Caco-2 (cell line): ENCODE measurements at regions of chr11 and their contacts with region 1.

Region 1: GRCh38 chr11:62081378-62082291 is 42.2 kb upstream of the INCENP start:
- DNase-seq: peak; percentile 71 to 87
- H3K4me3 ChIP-seq: no peak overlapping the region
- H3K4me3 Mint-ChIP-seq: no peak overlapping the region
- H3K27ac Mint-ChIP-seq: no peak overlapping the region
- H3K4me1 ChIP-seq: no peaks in the 10 kb centered on the region
- H3K4me1 Mint-ChIP-seq: no peaks in the 10 kb centered on the region
- H3K27me3 ChIP-seq: no peaks in the 10 kb centered on the region; the same call in 1 of the 2 replicates
- H3K27me3 Mint-ChIP-seq: no peaks in the 10 kb centered on the region
- CTCF ChIP-seq: peak; percentile 89 to 91

Region 2: DNA sequence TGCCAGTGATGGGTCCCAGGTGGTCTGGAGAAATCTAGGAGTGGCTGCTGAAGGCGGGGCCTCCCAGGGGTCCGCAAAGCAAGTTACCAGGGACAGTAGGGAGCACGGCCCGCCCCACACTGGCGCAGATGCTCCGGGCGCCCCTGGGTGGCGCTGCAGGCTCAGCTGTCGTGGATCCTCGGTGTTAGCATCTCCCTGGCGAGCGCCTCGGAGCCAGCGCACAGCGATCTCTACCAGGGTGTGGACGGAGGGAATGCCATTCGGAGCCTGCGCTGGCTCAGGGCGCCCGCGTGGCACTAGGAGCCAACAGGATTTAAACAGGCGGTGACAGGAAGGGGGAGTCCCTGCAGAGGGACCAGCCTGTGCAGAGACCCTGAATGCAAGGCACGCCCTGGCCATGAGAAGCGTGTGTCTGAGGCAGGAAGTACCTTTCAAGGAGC is 210.5 kb before region 1 on chr11:
- CTCF ChIA-PET with region 1: interaction called, 3 read pairs
- POLR2A ChIA-PET with region 1: no interaction called
- intact Hi-C with region 1: loop called (anchors 1 kb)
- DNase-seq: peak; percentile 64 to 79
- H3K4me3 ChIP-seq: no peak overlapping the region
- H3K4me3 Mint-ChIP-seq: no peak overlapping the region
- H3K27ac Mint-ChIP-seq: no peak overlapping the region
- H3K4me1 ChIP-seq: peaks cover 12% of the 10 kb centered on the region
- H3K4me1 Mint-ChIP-seq: no peaks in the 10 kb centered on the region
- H3K27me3 ChIP-seq: no peaks in the 10 kb centered on the region
- H3K27me3 Mint-ChIP-seq: no peaks in the 10 kb centered on the region
- CTCF ChIP-seq: peak; percentile 83 to 86

Region 3: GRCh38 chr11:61899146-61899841 is 182.3 kb before region 1 on chr11:
- CTCF ChIA-PET with region 1: interaction called, 48 read pairs
- POLR2A ChIA-PET with region 1: no interaction called
- intact Hi-C with region 1: loop called (anchors 1 kb)
- DNase-seq: peak; percentile 89 to 96
- H3K4me3 ChIP-seq: no peak overlapping the region
- H3K4me3 Mint-ChIP-seq: no peak overlapping the region
- H3K27ac Mint-ChIP-seq: no peak overlapping the region
- H3K4me1 ChIP-seq: no peaks in the 10 kb centered on the region
- H3K4me1 Mint-ChIP-seq: no peaks in the 10 kb centered on the region
- H3K27me3 ChIP-seq: no peaks in the 10 kb centered on the region
- H3K27me3 Mint-ChIP-seq: no peaks in the 10 kb centered on the region
- CTCF ChIP-seq: peak; percentile 100

Region 4: GRCh38 chr11:61954851-61955421 is 126.7 kb before region 1 on chr11:
- CTCF ChIA-PET with region 1: interaction called, 48 read pairs
- POLR2A ChIA-PET with region 1: interaction called, 8 read pairs
- intact Hi-C with region 1: loop called (anchors 2 kb)
- DNase-seq: peak; percentile 67 to 79
- H3K4me3 ChIP-seq: peak overlapping the region; percentile 43
- H3K4me3 Mint-ChIP-seq: peak overlapping the region; percentile 71
- H3K27ac Mint-ChIP-seq: peak overlapping the region; percentile 66
- H3K4me1 ChIP-seq: peaks cover 11% of the 10 kb centered on the region
- H3K4me1 Mint-ChIP-seq: no peaks in the 10 kb centered on the region
- H3K27me3 ChIP-seq: no peaks in the 10 kb centered on the region
- H3K27me3 Mint-ChIP-seq: no peaks in the 10 kb centered on the region
- CTCF ChIP-seq: peak in 1 of 2 experiments; percentile 37

Region 5: DNA sequence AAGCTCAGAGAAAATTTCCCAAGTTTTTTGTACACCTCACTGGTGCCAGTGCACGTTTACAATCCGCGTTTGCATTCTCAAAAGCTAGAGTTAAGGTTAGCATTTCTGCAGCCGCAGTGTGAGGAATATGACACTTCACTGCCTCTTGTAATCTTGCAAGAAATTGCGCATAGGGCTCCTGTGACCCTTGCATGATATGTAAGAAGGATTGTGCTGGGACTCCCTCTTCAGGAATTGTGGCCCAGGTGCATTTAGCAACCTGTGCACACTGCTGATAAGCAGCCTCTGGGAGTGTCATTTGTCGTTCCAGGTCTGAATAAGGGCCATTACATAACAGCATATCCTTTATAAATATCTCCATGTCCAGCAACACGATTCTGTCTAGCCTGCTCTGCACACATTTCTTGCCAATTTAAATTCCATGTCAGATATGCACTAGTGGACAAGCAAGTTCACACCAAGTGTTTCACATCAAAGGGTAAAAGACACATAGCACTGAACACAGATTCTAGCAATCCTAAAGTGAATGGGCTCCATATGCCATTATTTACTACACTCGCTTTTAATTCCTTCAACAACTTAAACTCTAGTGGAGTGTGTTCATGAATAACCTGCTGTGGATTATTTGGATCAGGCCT is 27.0 kb before region 1 on chr11:
- CTCF ChIA-PET with region 1: interaction called, 3 read pairs
- POLR2A ChIA-PET with region 1: no interaction called
- intact Hi-C with region 1: loop called (anchors 2 kb)
- DNase-seq: peak; percentile 83 to 85
- H3K4me3 ChIP-seq: no peak overlapping the region
- H3K4me3 Mint-ChIP-seq: peak overlapping the region; percentile 25
- H3K27ac Mint-ChIP-seq: peak overlapping the region; percentile 81
- H3K4me1 ChIP-seq: 0 out of 2 replicates have a peak, but pooled peaks cover 5% of the 10 kb centered on the region
- H3K4me1 Mint-ChIP-seq: no peaks in the 10 kb centered on the region
- H3K27me3 ChIP-seq: no peaks in the 10 kb centered on the region; the same call in 1 of the 2 replicates
- H3K27me3 Mint-ChIP-seq: no peaks in the 10 kb centered on the region
- CTCF ChIP-seq: peak; percentile 78 to 93

Region 6: GRCh38 chr11:62069986-62070919 is 11.4 kb before region 1 on chr11:
- CTCF ChIA-PET with region 1: interaction called, 11 read pairs
- POLR2A ChIA-PET with region 1: no interaction called
- intact Hi-C with region 1: no loop called
- DNase-seq: no peak
- H3K4me3 ChIP-seq: no peak overlapping the region
- H3K4me3 Mint-ChIP-seq: no peak overlapping the region
- H3K27ac Mint-ChIP-seq: no peak overlapping the region
- H3K4me1 ChIP-seq: no peaks in the 10 kb centered on the region
- H3K4me1 Mint-ChIP-seq: no peaks in the 10 kb centered on the region
- H3K27me3 ChIP-seq: no peaks in the 10 kb centered on the region
- H3K27me3 Mint-ChIP-seq: peaks cover 3% of the 10 kb centered on the region
- CTCF ChIP-seq: no peak

Region 7: DNA sequence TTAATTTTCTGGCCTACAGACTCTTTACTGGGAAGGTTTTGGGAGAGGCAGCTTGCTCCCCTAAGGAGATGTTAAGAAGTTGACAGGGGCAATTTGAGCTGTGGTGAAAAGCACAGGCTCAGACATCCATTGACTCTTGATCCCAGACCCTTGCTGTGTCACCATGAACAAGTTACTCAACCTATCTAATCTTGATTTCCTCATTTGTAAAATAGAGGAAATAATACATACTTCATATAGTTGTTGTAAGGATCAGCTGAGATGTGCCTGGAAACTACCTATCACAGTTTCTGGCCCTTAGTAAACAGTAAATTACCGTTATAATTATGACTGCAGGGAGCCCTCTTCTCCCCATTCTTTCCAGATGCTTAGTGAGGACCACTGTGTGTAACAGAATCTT is 233.8 kb after region 1 on chr11:
- CTCF ChIA-PET with region 1: no interaction called
- POLR2A ChIA-PET with region 1: no interaction called
- intact Hi-C with region 1: no loop called
- DNase-seq: no peak
- H3K4me3 ChIP-seq: no peak overlapping the region
- H3K4me3 Mint-ChIP-seq: no peak overlapping the region
- H3K27ac Mint-ChIP-seq: no peak overlapping the region
- H3K4me1 ChIP-seq: 0 out of 2 replicates have a peak, but pooled peaks cover 2% of the 10 kb centered on the region
- H3K4me1 Mint-ChIP-seq: peaks cover 7% of the 10 kb centered on the region
- H3K27me3 ChIP-seq: no peaks in the 10 kb centered on the region
- H3K27me3 Mint-ChIP-seq: no peaks in the 10 kb centered on the region
- CTCF ChIP-seq: no peak

Region 8: DNA sequence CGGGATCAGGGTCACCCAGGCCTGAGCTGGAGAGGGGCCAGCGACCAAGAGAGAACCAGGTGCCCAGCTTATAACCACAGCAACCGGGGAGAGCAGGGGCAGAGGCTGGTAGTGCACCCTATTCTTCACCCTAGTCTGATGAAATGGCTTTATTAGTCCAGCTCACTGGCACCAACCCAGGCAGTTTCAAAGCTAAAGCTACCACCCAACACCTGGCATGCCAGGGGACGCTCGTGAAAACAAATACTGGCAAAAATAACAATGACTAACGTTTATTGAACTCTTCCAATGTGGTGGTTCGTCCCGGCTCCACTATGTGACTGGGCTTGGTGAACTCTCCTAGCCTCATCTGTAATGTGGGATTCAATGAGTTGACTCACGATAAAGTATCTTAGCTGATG is 367.8 kb after region 1 on chr11:
- CTCF ChIA-PET with region 1: no interaction called
- POLR2A ChIA-PET with region 1: no interaction called
- intact Hi-C with region 1: no loop called
- DNase-seq: no peak
- H3K4me3 ChIP-seq: no peak overlapping the region
- H3K4me3 Mint-ChIP-seq: no peak overlapping the region
- H3K27ac Mint-ChIP-seq: no peak overlapping the region
- H3K4me1 ChIP-seq: peaks cover 9% of the 10 kb centered on the region
- H3K4me1 Mint-ChIP-seq: peaks cover 14% of the 10 kb centered on the region
- H3K27me3 ChIP-seq: no peaks in the 10 kb centered on the region
- H3K27me3 Mint-ChIP-seq: no peaks in the 10 kb centered on the region
- CTCF ChIP-seq: no peak